Mammary epithelial cell (primary cell): ENCODE measurements at regions of chr5 and their contacts with region 1.

Region 1: GRCh38 chr5:14399054-14399692 is 182.4 kb upstream of the OTULINL start:
- DNase-seq: peak; percentile 31
- H3K4me3 ChIP-seq: no peak overlapping the region
- H3K27ac ChIP-seq: no peak overlapping the region
- H3K4me1 ChIP-seq: peaks cover 31% of the 10 kb centered on the region
- H3K27me3 ChIP-seq: no peaks in the 10 kb centered on the region
- CTCF ChIP-seq: peak; percentile 66 to 70

Region 2: GRCh38 chr5:14097998-14098471 is 301.1 kb before region 1 on chr5:
- CTCF ChIA-PET with region 1: interaction called, 15 read pairs
- dilution Hi-C with region 1: no loop called
- in situ Hi-C with region 1: no loop called
- intact Hi-C with region 1: no loop called
- DNase-seq: peak; percentile 14
- H3K4me3 ChIP-seq: no peak overlapping the region
- H3K27ac ChIP-seq: no peak overlapping the region
- H3K4me1 ChIP-seq: peaks cover 3% of the 10 kb centered on the region
- H3K27me3 ChIP-seq: no peaks in the 10 kb centered on the region
- CTCF ChIP-seq: no peak

Region 3: DNA sequence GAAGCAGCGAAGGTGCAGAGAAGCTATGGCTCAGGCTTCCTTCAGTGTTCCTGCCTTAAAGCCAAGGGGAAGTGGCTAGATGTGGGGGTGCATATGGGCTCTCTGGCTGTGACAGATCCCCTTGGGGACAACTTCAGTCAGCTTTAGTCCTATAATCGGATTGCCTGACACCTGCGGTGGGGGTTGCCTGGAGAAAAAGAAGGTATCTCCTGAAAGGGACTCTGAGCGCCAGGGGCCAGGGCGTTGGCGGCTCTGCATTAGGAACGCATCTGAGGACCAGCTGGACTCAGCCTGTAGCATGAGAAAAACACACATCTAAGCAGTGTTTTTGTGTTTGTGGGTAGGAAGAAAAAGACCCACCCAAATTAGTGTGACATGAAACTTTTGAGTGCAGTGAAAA is 98.1 kb after region 1 on chr5:
- CTCF ChIA-PET with region 1: no interaction called
- dilution Hi-C with region 1: no loop called
- in situ Hi-C with region 1: no loop called
- intact Hi-C with region 1: loop called (anchors 5 kb)
- DNase-seq: no peak
- H3K4me3 ChIP-seq: no peak overlapping the region
- H3K27ac ChIP-seq: no peak overlapping the region
- H3K4me1 ChIP-seq: no peaks in the 10 kb centered on the region
- H3K27me3 ChIP-seq: no peaks in the 10 kb centered on the region
- CTCF ChIP-seq: no peak